Panc1 (cell line): ENCODE measurements at regions of chr17 and their contacts with region 1.

Region 1: DNA sequence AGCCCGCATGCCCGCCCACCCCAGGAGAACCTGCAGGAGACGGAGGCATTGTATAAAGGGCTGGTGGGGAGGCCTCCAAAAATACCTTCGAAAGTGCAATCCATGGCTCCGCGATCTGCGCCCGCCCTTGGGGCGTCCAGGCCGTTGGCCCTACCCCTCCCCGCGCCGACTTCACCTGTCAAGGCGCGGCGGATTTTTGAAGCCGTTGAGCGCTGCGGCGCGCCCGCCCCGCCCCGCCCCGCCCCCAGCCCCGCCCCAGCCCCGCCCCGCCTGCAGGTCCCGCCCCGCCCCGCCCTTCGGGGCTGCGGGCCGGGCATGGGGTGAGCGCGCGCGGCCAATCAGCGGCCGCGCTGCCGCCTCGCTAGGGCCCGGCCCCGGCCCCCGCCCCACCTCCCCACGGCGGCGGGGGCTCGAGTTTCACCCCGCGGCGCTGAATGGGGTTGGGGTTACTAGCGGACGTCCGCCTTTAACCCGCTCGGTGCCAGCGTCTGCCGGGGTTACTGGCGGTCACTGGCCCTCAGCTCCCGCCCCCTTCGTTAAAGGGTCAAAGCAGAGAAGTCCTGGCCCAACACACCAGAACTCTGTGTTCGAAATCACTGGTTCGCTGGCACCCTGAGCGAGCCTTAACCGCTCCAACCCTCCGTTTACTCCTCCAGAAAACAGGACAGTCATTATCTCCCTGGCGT is 13.2 kb downstream of the SREBF1 start:
- DNase-seq: no peak
- ATAC-seq: peak; percentile 88
- H3K4me3 ChIP-seq: peak overlapping the region; percentile 49 to 65
- H3K27ac ChIP-seq: peak overlapping the region; percentile 96
- H3K4me1 ChIP-seq: peaks cover 89% of the 10 kb centered on the region
- H3K27me3 ChIP-seq: no peaks in the 10 kb centered on the region
- CTCF ChIP-seq: no peak

Region 2: DNA sequence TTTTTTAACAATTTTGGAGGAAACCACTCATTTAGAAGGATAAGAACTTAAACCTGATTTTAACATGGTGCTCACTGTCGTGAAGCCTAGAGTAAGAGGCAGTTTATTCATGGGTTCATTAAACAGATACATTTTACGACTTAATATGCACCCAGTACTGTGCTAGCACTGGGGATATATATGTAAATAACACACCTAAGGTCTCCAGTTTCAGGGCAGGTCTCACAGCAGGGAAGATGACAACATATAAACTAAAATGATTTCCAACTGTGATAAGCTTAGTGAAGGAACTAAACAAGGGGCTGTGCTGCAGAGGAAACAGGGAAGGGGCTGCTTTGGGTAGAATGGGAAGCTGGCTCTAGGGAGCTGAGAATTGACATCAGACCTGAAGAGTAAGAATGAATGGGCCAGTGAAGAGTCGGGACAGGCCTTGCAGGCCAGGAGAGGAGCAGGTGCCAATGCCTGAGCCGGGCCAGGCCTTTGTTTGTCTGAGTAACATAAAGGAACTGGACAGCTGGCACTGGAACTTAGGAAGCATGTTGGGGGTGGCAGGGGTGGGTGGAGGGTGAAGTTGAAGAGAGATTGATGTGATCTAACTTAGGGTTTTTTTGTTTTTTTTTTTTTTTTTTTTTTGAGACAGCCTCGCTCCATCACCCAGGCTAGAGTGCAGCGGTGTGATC is 508.3 kb before region 1 on chr17:
- CTCF ChIA-PET with region 1: no interaction called
- POLR2A ChIA-PET with region 1: no interaction called
- in situ Hi-C with region 1: no loop called
- intact Hi-C with region 1: no loop called
- DNase-seq: no peak
- ATAC-seq: no peak
- H3K4me3 ChIP-seq: no peak overlapping the region
- H3K27ac ChIP-seq: no peak overlapping the region
- H3K4me1 ChIP-seq: no peaks in the 10 kb centered on the region
- H3K27me3 ChIP-seq: no peaks in the 10 kb centered on the region
- CTCF ChIP-seq: no peak

Region 3: DNA sequence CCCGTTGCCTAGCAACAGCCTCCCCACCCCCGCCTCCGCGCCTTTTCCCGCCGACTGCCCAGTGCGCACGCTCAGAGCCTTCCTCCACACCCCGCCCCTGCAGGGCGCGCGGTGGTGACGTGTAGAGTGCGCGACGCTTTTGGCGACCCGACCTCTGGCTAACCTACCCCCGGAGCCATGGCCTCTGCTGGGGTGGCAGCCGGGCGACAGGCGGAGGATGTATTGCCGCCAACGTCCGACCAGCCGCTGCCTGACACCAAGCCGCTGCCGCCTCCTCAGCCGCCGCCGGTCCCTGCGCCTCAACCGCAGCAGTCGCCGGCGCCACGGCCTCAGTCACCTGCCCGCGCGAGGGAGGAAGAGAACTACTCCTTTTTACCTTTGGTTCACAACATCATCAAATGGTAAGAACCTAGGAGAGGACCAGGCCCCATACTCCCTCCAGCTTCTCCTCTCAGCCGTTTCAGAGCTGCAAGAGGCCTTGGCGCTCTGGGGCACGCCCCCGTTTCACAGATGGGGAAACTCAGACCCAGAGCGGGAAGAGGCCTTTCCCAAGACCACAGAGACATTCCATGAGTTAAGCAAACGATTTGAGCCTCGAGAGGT is 346.6 kb before region 1 on chr17 and contains the start of gene MED9:
- CTCF ChIA-PET with region 1: no interaction called
- POLR2A ChIA-PET with region 1: no interaction called
- in situ Hi-C with region 1: no loop called
- intact Hi-C with region 1: no loop called
- DNase-seq: peak; percentile 48
- ATAC-seq: peak; percentile 97
- H3K4me3 ChIP-seq: peak within 1 kb of the TSS; percentile 86 to 94
- H3K27ac ChIP-seq: peak within 1 kb of the TSS; percentile 79
- H3K4me1 ChIP-seq: peaks cover 4% of the 10 kb centered on the region; the same call in 1 of the 2 replicates
- H3K27me3 ChIP-seq: no peaks in the 10 kb centered on the region; the same call in 1 of the 2 replicates
- CTCF ChIP-seq: no peak
- total RNA-seq, gene MED9: 11.1 TPM

Region 4: DNA sequence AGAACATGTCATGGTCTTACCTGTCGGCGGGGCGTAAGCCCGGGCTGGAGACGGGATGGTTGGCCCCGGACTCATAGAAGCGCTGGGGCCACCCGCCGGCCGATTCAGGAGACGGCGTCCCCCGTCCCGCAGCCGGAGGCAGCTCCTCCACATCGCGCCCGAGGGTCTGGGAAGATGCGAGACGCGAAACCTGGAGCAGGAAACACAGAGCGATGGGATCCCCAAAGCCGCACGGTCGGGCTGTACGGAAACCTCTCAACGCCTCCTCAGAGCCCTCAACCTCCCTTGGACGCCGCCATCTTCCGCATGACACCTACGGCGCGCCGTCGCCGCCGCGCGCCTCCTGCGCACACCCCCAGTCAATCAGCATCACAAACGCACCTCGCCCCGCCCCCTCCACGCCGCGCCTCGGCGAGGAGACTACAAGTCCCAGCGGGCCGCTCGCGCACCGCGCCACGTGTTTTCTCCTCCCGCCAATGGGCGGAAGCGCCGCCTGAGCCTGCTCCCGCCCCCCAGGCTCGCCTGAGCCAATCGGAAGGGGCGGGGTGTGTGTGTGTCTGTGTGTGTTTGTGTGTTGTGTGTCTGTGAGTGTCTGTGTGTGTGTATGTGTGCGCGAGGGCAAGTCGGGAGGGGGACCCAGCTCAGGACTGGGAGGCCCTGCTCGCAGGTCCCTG is 215.4 kb after region 1 on chr17 and contains the starts of genes ATPAF2 and GID4:
- CTCF ChIA-PET with region 1: no interaction called
- POLR2A ChIA-PET with region 1: no interaction called
- in situ Hi-C with region 1: no loop called
- intact Hi-C with region 1: loop called (anchors 10 kb)
- DNase-seq: peak; percentile 92
- ATAC-seq: peak; percentile 96
- H3K4me3 ChIP-seq: peak within 1 kb of the TSS; percentile 82 to 86
- H3K27ac ChIP-seq: peak within 1 kb of the TSS; percentile 76
- H3K4me1 ChIP-seq: peaks cover 22% of the 10 kb centered on the region
- H3K27me3 ChIP-seq: no peaks in the 10 kb centered on the region
- CTCF ChIP-seq: no peak
- total RNA-seq, gene ATPAF2: 22.3 TPM
- total RNA-seq, gene GID4: 11.1 TPM